ENCODE measurements at regions of chr6 and their contacts with region 1.

Region 1: GRCh38 chr6:137094411-137095008 is 49.7 kb upstream of the IL20RA start:
- DNase-seq: peak; percentile 48 to 53
- H3K4me3 ChIP-seq: no peak overlapping the region
- H3K27ac ChIP-seq: no peak overlapping the region
- H3K4me1 ChIP-seq: no peaks in the 10 kb centered on the region
- H3K27me3 ChIP-seq: no peaks in the 10 kb centered on the region
- CTCF ChIP-seq: peak; percentile 56 to 82 (median 80)
- POLR2A ChIP-seq: no peak

Region 2: DNA sequence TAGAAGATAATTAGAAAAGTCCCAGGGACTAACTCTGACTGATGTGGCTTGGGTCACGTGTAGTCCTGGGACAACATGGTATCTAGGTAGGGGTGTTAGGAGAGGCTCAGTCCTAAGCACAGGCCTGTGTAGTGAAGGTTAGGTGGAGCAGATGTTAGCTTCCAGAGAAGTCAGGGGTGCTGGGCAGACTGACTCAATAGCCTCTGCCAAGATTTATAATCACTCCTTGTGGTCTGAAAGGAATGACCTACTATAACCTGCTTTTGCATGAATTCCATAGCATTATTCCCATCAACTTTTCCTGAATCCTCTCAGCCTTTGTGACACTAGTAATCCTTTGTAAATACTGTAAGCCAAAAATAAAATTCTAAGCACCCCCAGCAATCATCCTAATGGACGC is 282.3 kb before region 1 on chr6:
- intact Hi-C with region 1: no loop called
- DNase-seq: no peak
- H3K4me3 ChIP-seq: no peak overlapping the region
- H3K27ac ChIP-seq: no peak overlapping the region
- H3K4me1 ChIP-seq: no peaks in the 10 kb centered on the region
- H3K27me3 ChIP-seq: no peaks in the 10 kb centered on the region
- CTCF ChIP-seq: no peak
- POLR2A ChIP-seq: no peak

Region 3: GRCh38 chr6:137313928-137314855 is 219.7 kb after region 1 on chr6:
- intact Hi-C with region 1: loop called (anchors 5 kb)
- DNase-seq: peak; percentile 68 to 71
- H3K4me3 ChIP-seq: no peak overlapping the region
- H3K27ac ChIP-seq: no peak overlapping the region
- H3K4me1 ChIP-seq: peaks cover 0 to 6% of the 10 kb centered on the region in 2 donors
- H3K27me3 ChIP-seq: no peaks in the 10 kb centered on the region
- CTCF ChIP-seq: peak; percentile 23 to 91 (median 69)
- POLR2A ChIP-seq: no peak

Region 4: GRCh38 chr6:137641474-137642077 is 547.1 kb after region 1 on chr6:
- intact Hi-C with region 1: loop called (anchors 10 kb)
- DNase-seq: peak; percentile 67 to 72
- H3K4me3 ChIP-seq: no peak overlapping the region
- H3K27ac ChIP-seq: no peak overlapping the region
- H3K4me1 ChIP-seq: peaks cover 0 to 3% of the 10 kb centered on the region in 2 donors
- H3K27me3 ChIP-seq: no peaks in the 10 kb centered on the region
- CTCF ChIP-seq: peak in 5 of 6 experiments; percentile 25 to 87 (median 64)
- POLR2A ChIP-seq: no peak

Region 5: GRCh38 chr6:137783710-137784109 is 689.2 kb after region 1 on chr6:
- intact Hi-C with region 1: no loop called
- DNase-seq: peak in 1 of 2 donors; percentile 7
- H3K4me3 ChIP-seq: no peak overlapping the region
- H3K27ac ChIP-seq: no peak overlapping the region
- H3K4me1 ChIP-seq: no peaks in the 10 kb centered on the region
- H3K27me3 ChIP-seq: no peaks in the 10 kb centered on the region
- CTCF ChIP-seq: no peak
- POLR2A ChIP-seq: no peak